Activated CD4-positive, alpha-beta T cell treated with anti-CD3 and anti-CD28 coated beads, Interleukin-2, amount 10 ng/mL, durations not matched to agents 24 days and 14 days (primary cell): ENCODE measurements at regions of chr12 and their contacts with region 1.

Region 1: GRCh38 chr12:64669270-64669842 is 59.1 kb downstream of the RASSF3 start:
- DNase-seq: peak; percentile 88
- H3K4me3 Mint-ChIP-seq: peak overlapping the region; percentile 83
- H3K27ac Mint-ChIP-seq: peak overlapping the region; percentile 91
- H3K4me1 Mint-ChIP-seq: peaks cover 82% of the 10 kb centered on the region
- H3K27me3 Mint-ChIP-seq: no peaks in the 10 kb centered on the region

Region 2: GRCh38 chr12:62692884-62693283 is 1976.5 kb before region 1 on chr12:
- intact Hi-C with region 1: no loop called
- DNase-seq: no peak
- H3K4me3 Mint-ChIP-seq: no peak overlapping the region
- H3K27ac Mint-ChIP-seq: no peak overlapping the region
- H3K4me1 Mint-ChIP-seq: peaks cover 15% of the 10 kb centered on the region
- H3K27me3 Mint-ChIP-seq: peaks cover 3% of the 10 kb centered on the region

Region 3: GRCh38 chr12:64625243-64626077 is 43.9 kb before region 1 on chr12:
- intact Hi-C with region 1: loop called (anchors 2 kb)
- DNase-seq: peak; percentile 60
- H3K4me3 Mint-ChIP-seq: peak overlapping the region; percentile 71
- H3K27ac Mint-ChIP-seq: peak overlapping the region; percentile 77
- H3K4me1 Mint-ChIP-seq: peaks cover 37% of the 10 kb centered on the region
- H3K27me3 Mint-ChIP-seq: no peaks in the 10 kb centered on the region

Region 4: GRCh38 chr12:64679487-64679983 is 10.2 kb after region 1 on chr12:
- intact Hi-C with region 1: loop called (anchors 1 kb)
- DNase-seq: peak; percentile 87
- H3K4me3 Mint-ChIP-seq: peak overlapping the region; percentile 63
- H3K27ac Mint-ChIP-seq: peak overlapping the region; percentile 78
- H3K4me1 Mint-ChIP-seq: peaks cover 80% of the 10 kb centered on the region
- H3K27me3 Mint-ChIP-seq: no peaks in the 10 kb centered on the region

Region 5: DNA sequence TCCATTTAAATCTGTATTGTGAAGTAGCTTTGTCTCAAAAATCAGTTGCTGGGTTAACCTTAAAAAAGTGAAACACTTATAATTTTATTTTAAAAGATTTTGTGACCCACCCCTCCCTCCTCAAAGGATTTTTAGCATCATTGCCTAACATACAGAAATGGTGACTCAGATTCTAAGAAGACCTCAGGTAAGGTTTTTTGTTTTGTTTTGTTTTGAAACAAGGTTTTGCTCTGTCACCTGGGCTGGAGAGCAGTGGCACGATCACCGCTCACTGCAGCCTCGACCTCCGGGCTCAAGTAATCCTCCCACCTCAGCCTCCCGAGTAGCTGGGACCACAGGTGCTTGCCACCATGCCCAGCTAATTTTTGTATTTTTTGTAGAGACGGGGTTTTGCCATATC is 15.7 kb after region 1 on chr12:
- intact Hi-C with region 1: loop called (anchors 2 kb)
- DNase-seq: peak; percentile 72
- H3K4me3 Mint-ChIP-seq: peak overlapping the region; percentile 13
- H3K27ac Mint-ChIP-seq: peak overlapping the region; percentile 88
- H3K4me1 Mint-ChIP-seq: peaks cover 72% of the 10 kb centered on the region
- H3K27me3 Mint-ChIP-seq: no peaks in the 10 kb centered on the region

Region 6: DNA sequence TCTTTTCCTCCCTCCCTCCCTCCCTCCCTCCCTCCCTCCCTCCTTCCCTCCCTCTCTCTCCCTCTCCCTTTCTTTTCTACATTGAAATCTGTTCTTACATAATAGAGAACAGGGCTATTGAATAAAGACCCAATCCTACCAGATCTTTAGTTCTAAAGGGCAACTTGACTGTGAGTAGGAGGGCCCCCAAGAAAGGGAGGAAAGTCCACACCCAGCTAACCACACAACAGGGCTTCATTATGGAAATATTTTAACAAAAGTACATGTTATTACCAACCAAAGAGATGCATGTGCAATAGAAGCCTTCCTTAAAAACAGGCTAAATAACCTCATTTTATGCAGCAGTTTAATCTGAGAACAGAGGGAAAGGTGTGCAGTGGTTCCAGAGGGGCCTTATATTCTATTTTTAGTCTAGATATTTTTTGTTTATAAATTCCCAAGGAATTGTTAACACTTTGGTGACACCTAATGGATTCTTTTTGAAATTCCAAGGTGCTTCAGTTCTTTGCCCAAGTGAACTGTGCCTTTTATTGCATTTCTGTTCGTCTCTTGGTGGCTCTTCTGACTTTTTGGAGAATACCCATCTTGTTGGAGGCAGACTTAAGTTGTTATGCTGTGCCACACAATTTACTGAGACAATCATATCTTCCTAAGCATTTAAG is 26.9 kb after region 1 on chr12:
- intact Hi-C with region 1: loop called (anchors 2 kb)
- DNase-seq: no peak
- H3K4me3 Mint-ChIP-seq: no peak overlapping the region
- H3K27ac Mint-ChIP-seq: no peak overlapping the region
- H3K4me1 Mint-ChIP-seq: peaks cover 58% of the 10 kb centered on the region
- H3K27me3 Mint-ChIP-seq: no peaks in the 10 kb centered on the region

Region 7: DNA sequence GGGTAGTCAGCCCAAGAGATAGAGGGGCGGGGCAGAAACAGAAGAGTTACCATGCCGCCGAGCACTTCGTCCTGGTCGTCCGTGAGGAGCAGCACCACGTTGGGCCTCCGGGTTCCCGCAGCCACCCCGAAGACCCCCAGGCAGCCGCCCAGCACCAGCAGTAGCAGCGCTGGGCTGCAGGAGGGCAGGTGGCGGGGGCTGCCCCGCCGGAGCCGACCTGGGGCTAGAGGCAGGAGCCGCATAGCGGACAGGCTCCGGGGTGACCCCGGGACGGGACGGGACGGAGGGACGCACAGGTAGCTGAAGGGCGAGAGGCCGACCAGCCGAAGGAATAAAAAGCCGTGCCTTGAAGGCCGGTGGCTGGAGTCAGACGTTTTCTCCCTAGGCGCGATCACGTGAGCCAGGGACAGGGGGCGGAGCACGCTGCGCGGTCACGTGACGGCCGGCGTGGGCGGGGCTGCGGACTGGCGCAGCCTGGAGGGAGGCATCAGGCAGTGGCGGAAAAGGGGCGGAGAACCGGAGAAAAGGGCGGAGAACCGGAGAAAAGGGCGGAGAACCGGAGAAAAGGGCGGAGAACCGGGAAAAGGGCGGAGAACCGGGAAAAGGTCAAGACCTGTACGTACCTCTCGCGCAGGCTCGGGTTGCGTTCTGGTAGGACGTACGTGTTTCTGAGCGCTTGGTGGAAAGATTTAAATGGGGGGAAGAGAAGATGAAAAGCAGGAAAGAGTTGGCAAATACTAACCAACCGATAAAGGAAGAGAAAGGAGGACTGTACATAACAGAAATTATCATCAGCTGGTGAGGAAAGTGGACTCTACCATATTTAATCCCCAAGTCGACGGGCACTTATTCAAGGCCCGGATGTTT is 89.9 kb after region 1 on chr12 and contains the start of gene GNS:
- intact Hi-C with region 1: loop called (anchors 5 kb)
- DNase-seq: peak; percentile 100
- H3K4me3 Mint-ChIP-seq: peak within 1 kb of the TSS; percentile 90
- H3K27ac Mint-ChIP-seq: peak within 1 kb of the TSS; percentile 92
- H3K4me1 Mint-ChIP-seq: peaks cover 37% of the 10 kb centered on the region
- H3K27me3 Mint-ChIP-seq: peaks cover 6% of the 10 kb centered on the region
- total RNA-seq, gene GNS: 19.9 and 20.5 TPM in 2 replicates